Spleen (tissue), 13 donors: ENCODE measurements at regions of chr9 and their contacts with region 1.

Region 1: GRCh38 chr9:7560669-7561305 is 238.8 kb downstream of the DMAC1 start:
- DNase-seq: no peak
- H3K4me3 ChIP-seq: no peak overlapping the region
- H3K27ac ChIP-seq: no peak overlapping the region
- H3K4me1 ChIP-seq: no peaks in the 10 kb centered on the region
- H3K27me3 ChIP-seq: no peaks in the 10 kb centered on the region
- CTCF ChIP-seq: no peak
- POLR2A ChIP-seq: no peak

Region 2: DNA sequence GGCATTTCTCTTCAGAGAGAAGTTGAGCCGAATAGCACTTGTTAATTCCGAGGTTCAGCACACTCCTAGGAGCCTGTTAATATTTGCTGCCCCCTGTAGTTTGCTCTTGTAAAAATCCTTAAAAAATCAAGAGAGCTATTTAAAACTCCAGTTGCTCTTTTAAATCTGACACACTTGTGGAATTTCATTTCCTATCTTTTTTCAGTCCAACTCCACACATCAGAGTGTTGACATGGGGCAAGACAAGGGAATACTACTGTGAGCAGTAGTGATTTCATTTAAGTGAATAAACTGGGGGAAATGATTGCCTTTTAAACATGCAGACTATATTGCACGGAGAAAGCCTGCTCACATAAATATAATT is 1335.1 kb after region 1 on chr9:
- intact Hi-C with region 1: loop called (anchors 10 kb)
- DNase-seq: no peak
- H3K4me3 ChIP-seq: no peak overlapping the region
- H3K27ac ChIP-seq: no peak overlapping the region
- H3K4me1 ChIP-seq: peaks cover 0 to 4% (median 0%) of the 10 kb centered on the region in 6 donors
- H3K27me3 ChIP-seq: no peaks in the 10 kb centered on the region
- CTCF ChIP-seq: peak in 6 of 11 experiments; percentile 22 to 45 (median 34)
- POLR2A ChIP-seq: no peak